Endothelial cell of umbilical vein (primary cell): ENCODE measurements at regions of chr9 and their contacts with region 1.

Region 1: GRCh38 chr9:34458013-34458958 is at the starts of genes DNAI1 and FAM219A:
- DNase-seq: peak; percentile 99
- H3K4me3 ChIP-seq: peak within 1 kb of the TSS; percentile 47 to 70 (median 67)
- H3K27ac ChIP-seq: peak within 1 kb of the TSS; percentile 74
- H3K4me1 ChIP-seq: peaks cover 16% of the 10 kb centered on the region
- H3K27me3 ChIP-seq: peaks cover 5 to 18% of the 10 kb centered on the region in 2 experiments
- CTCF ChIP-seq: no peak
- POLR2A ChIP-seq: peak; percentile 83
- total RNA-seq, gene DNAI1: not detected in 2 replicates
- total RNA-seq, gene FAM219A: 35.7 and 39.5 TPM in 2 replicates

Region 2: GRCh38 chr9:34386656-34387055 is 71.6 kb before region 1 on chr9:
- CTCF ChIA-PET with region 1: no interaction called
- POLR2A ChIA-PET with region 1: no interaction called
- dilution Hi-C with region 1: no loop called
- intact Hi-C with region 1: no loop called
- DNase-seq: no peak
- H3K4me3 ChIP-seq: no peak overlapping the region
- H3K27ac ChIP-seq: no peak overlapping the region
- H3K4me1 ChIP-seq: no peaks in the 10 kb centered on the region
- H3K27me3 ChIP-seq: peaks cover 0 to 9% of the 10 kb centered on the region in 2 experiments
- CTCF ChIP-seq: no peak
- POLR2A ChIP-seq: no peak

Region 3: DNA sequence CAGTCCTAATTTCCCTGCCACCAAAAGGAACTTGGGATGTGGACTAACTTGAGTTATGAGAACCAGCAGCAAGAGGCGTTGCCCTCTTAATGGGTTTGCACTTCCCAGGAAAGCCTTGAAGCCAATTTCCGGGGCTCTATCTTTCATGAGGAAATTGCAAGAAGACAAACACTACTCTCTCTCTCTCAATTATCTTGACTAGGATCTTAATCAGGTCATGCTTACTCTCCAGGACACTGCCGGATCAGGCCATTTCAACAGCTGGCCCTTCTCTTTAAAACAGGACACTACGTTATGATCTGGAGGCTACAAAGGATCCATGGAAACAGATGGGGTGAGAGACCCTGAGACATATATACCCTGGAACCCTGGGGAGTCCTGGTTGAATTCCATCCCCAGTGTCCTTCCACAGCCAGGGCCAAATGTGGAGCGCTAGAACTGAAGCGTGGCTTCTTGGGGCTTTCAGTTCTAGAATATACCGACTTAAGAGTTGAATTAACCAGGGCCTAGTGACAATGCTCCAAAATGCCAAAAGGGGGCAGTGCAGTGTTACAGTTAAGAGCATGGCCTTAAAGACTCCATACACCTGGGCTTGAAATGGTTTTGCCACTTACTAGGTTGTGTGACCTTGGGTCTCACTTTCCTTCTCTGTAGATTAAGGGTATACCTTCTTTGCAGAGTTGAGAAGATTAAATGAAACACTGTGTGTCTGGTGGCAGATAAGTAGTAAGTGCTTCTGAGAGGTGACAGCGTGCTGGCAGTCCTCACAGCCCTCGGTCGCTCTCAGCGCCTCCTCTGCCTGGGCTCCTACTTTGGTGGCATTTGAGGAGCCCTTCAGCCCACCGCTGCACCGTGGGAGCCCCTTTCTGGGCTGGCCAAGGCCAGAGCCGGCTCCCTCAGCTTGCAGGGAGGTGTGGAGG is 21.0 kb before region 1 on chr9:
- CTCF ChIA-PET with region 1: interaction called, 30 read pairs
- POLR2A ChIA-PET with region 1: interaction called, 3 read pairs
- dilution Hi-C with region 1: no loop called
- intact Hi-C with region 1: loop called (anchors 2 kb)
- DNase-seq: peak; percentile 83
- H3K4me3 ChIP-seq: no peak overlapping the region
- H3K27ac ChIP-seq: no peak overlapping the region
- H3K4me1 ChIP-seq: peaks cover 18% of the 10 kb centered on the region
- H3K27me3 ChIP-seq: no peaks in the 10 kb centered on the region
- CTCF ChIP-seq: peak; percentile 75 to 77
- POLR2A ChIP-seq: no peak

Region 4: GRCh38 chr9:34446468-34446891 is 11.8 kb before region 1 on chr9:
- CTCF ChIA-PET with region 1: interaction called, 37 read pairs
- POLR2A ChIA-PET with region 1: interaction called, 3 read pairs
- dilution Hi-C with region 1: no loop called
- intact Hi-C with region 1: loop called (anchors 2 kb)
- DNase-seq: no peak
- H3K4me3 ChIP-seq: no peak overlapping the region
- H3K27ac ChIP-seq: no peak overlapping the region
- H3K4me1 ChIP-seq: peaks cover 26% of the 10 kb centered on the region
- H3K27me3 ChIP-seq: no peaks in the 10 kb centered on the region
- CTCF ChIP-seq: no peak
- POLR2A ChIP-seq: no peak

Region 5: GRCh38 chr9:34493972-34494535 is 35.8 kb after region 1 on chr9:
- CTCF ChIA-PET with region 1: interaction called, 3 read pairs
- POLR2A ChIA-PET with region 1: no interaction called
- dilution Hi-C with region 1: no loop called
- intact Hi-C with region 1: loop called (anchors 1 kb)
- DNase-seq: peak; percentile 49
- H3K4me3 ChIP-seq: no peak overlapping the region
- H3K27ac ChIP-seq: no peak overlapping the region
- H3K4me1 ChIP-seq: peaks cover 14% of the 10 kb centered on the region
- H3K27me3 ChIP-seq: peaks cover 6 to 8% of the 10 kb centered on the region in 2 experiments
- CTCF ChIP-seq: no peak
- POLR2A ChIP-seq: no peak

Region 6: GRCh38 chr9:34611829-34612630 is 153.7 kb after region 1 on chr9 and contains the start of gene RPP25L:
- CTCF ChIA-PET with region 1: no interaction called
- POLR2A ChIA-PET with region 1: no interaction called
- dilution Hi-C with region 1: no loop called
- intact Hi-C with region 1: loop called (anchors 5 kb)
- DNase-seq: peak; percentile 83
- H3K4me3 ChIP-seq: peak within 1 kb of the TSS; percentile 41 to 79 (median 77)
- H3K27ac ChIP-seq: peak within 1 kb of the TSS; percentile 72
- H3K4me1 ChIP-seq: peaks cover 13% of the 10 kb centered on the region
- H3K27me3 ChIP-seq: no peaks in the 10 kb centered on the region
- CTCF ChIP-seq: no peak
- POLR2A ChIP-seq: peak; percentile 87
- total RNA-seq, gene RPP25L: 15.1 and 15.7 TPM in 2 replicates